ENCODE measurements at regions of chr14 and their contacts with region 1.

Region 1: DNA sequence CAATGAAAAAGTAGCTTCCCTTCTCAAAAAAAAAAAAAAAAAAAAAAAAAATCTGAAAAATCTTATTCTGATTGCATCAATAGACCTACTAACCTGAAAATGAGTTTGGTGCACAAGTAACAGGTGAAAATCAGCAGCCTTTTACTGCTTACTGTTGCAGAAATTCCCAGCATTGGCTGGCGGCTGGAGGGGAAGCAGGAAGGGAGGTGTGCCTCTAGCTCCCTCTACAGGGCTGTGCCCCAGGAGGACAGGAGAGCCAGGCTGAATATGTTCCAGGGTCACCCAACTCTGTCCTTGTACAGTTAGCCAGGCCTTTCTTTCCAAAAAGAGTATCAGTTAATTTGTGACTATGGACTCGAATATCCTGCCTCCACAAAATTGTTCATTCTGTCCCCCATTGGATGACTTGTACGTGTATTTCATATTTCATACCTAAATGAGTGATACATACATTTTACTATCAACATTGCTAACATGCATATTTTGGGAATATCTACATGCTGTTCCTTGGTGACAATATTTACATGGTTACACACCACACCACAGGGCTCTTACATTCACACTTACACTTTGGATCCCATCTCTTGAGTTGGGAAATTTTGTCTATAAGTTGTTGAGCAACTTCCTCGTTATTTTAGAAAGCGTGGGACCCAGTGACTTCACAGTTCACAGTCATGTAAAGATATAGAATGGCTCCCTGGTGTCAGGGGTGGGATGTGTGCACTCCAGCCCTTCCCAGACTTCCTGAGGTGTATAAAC is 124.8 kb downstream of the SAMD4A start:
- DNase-seq: peak; percentile 87

Region 2: GRCh38 chr14:54773171-54773975 is 81.7 kb after region 1 on chr14:
- intact Hi-C with region 1: loop called (anchors 2 kb)
- DNase-seq: peak; percentile 91